Heart left ventricle (tissue), 16 donors: ENCODE measurements at regions of chr13 and their contacts with region 1.

Region 1: DNA sequence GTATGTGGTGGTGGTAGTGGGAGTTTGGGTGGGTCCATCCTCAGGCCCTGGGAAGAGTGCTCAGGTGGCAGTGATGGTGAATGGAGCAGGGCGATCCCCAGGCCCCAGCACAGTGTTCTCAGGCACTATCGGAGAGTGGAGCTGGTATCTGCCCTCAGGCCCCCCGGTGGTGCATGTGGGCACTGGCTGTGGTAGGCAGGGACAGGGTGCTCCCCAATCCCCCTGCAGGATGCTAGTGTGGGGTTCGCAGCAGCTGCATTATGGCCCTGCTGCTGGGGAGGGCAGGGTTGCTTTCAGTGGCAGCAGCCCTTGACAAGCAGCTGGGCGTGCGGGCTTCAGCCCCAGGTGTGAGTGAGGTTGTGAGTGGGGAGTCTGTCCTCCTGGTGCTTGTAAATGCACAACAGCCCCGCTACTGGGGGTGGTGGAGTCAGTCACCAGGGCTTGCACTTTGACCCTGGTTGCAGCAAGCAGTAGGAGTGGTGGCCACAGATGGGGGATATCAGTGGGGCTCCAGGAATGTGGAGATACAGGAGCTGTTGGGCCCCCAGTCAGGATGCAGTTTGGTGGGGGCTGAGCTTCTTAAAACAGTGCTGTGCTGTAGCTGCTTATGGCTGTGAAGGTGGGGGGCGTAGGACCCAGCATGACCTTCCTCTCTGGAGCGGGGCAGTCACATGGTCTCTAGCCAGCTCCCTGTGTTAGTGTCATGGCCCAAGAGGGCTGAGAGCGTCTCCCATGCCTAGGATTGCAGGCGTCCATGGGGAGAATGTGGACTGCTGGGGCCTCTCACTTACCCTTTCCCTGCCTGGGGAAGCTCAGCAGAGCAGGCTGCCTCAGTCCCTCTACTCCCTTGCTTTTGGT is 38.7 kb upstream of the ARHGEF7 start:
- DNase-seq: no peak
- ATAC-seq: no peak
- H3K4me3 ChIP-seq: no peak overlapping the region
- H3K27ac ChIP-seq: no peak overlapping the region
- H3K4me1 ChIP-seq: no peaks in the 10 kb centered on the region
- H3K27me3 ChIP-seq: no peaks in the 10 kb centered on the region
- CTCF ChIP-seq: no peak
- POLR2A ChIP-seq: no peak

Region 2: GRCh38 chr13:110944121-110944967 is 132.0 kb before region 1 on chr13:
- intact Hi-C with region 1: no loop called
- DNase-seq: peak in 1 of 5 donors; percentile 30
- ATAC-seq: peak in 3 of 4 donors; percentile 70 to 82 (median 76)
- H3K4me3 ChIP-seq: no peak overlapping the region
- H3K27ac ChIP-seq: peak overlapping the region in 8 of 12 donors; percentile 29 to 61 (median 44)
- H3K4me1 ChIP-seq: peaks cover 0 to 19% (median 6%) of the 10 kb centered on the region in 12 donors
- H3K27me3 ChIP-seq: no peaks in the 10 kb centered on the region
- CTCF ChIP-seq: peak; percentile 12 to 64 (median 39)
- POLR2A ChIP-seq: no peak

Region 3: GRCh38 chr13:111114362-111115060 is 38.1 kb after region 1 on chr13:
- intact Hi-C with region 1: no loop called
- DNase-seq: peak; percentile 46 to 79 (median 61)
- ATAC-seq: peak in 3 of 4 donors; percentile 69 to 78 (median 70)
- H3K4me3 ChIP-seq: peak overlapping the region; percentile 39 to 78 (median 64)
- H3K27ac ChIP-seq: peak overlapping the region; percentile 20 to 88 (median 78)
- H3K4me1 ChIP-seq: peaks cover 0 to 22% (median 9%) of the 10 kb centered on the region in 12 donors
- H3K27me3 ChIP-seq: peaks cover 0 to 68% (median 5%) of the 10 kb centered on the region in 9 donors
- CTCF ChIP-seq: no peak
- POLR2A ChIP-seq: no peak

Region 4: DNA sequence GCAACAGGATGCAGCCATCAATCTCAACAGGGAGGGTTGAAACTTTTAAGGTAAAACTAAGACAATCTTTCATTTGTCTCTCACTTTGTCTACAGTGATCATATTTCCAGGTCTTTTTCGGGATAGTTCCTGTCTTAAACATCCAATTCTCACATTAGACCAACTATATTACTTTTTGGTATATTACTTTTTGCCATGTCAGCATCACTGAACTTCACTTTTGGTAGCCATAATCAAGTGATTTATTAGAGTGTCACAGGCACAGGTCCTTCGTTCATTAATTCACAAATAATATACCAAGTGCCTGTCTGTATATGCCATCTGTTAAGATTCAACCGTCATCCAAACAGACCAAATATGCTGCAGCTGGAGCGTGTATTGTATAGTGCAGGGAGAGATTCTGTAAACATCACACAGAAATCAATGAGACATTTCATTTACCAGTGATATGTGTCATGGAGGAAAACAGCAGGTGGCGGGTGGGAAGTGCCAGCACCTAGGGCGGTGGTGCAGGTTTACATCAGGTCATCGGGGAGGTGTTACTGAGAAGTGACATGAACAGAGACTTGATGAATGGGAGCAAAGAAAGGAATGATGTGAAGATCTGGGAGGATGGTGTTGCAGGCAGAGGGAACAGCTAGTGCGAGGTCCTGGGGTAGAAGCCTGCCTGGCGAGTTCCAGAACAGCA is 63.6 kb after region 1 on chr13:
- intact Hi-C with region 1: loop called in 1 of 10 experiments (anchors 10 kb)
- DNase-seq: no peak
- ATAC-seq: no peak
- H3K4me3 ChIP-seq: no peak overlapping the region
- H3K27ac ChIP-seq: no peak overlapping the region
- H3K4me1 ChIP-seq: peaks cover 0 to 27% (median 7%) of the 10 kb centered on the region in 12 donors
- H3K27me3 ChIP-seq: no peaks in the 10 kb centered on the region
- CTCF ChIP-seq: no peak
- POLR2A ChIP-seq: no peak

Region 5: GRCh38 chr13:111216166-111216960 is 140.0 kb after region 1 on chr13:
- intact Hi-C with region 1: loop called in 2 of 10 experiments (anchors 5 kb)
- DNase-seq: peak in 1 of 5 donors; percentile 37
- ATAC-seq: peak; percentile 40 to 61 (median 43)
- H3K4me3 ChIP-seq: no peak overlapping the region
- H3K27ac ChIP-seq: peak overlapping the region in 9 of 12 donors; percentile 8 to 65 (median 22)
- H3K4me1 ChIP-seq: peaks cover 0 to 92% (median 73%) of the 10 kb centered on the region in 12 donors
- H3K27me3 ChIP-seq: no peaks in the 10 kb centered on the region
- CTCF ChIP-seq: peak in 11 of 12 donors; percentile 19 to 57 (median 42)
- POLR2A ChIP-seq: no peak